K562 (cell line): ENCODE measurements at regions of chr2 and their contacts with region 1.

Region 1: GRCh38 chr2:180991820-180992219 is 11.4 kb downstream of the UBE2E3 start:
- DNase-seq: no peak
- ATAC-seq: peak; percentile 36
- H3K4me3 ChIP-seq: no peak overlapping the region
- H3K27ac ChIP-seq: no peak overlapping the region
- H3K4me1 ChIP-seq: no peaks in the 10 kb centered on the region
- H3K27me3 ChIP-seq: no peaks in the 10 kb centered on the region
- CTCF ChIP-seq: no peak
- EP300 ChIP-seq: no peak
- POLR2A ChIP-seq: no peak
- RAD21 ChIP-seq: no peak

Region 2: GRCh38 chr2:180699657-180700361 is 292.0 kb before region 1 on chr2:
- CTCF ChIA-PET with region 1: no interaction called
- POLR2A ChIA-PET with region 1: no interaction called
- in situ Hi-C with region 1: no loop called
- intact Hi-C with region 1: no loop called
- DNase-seq: no peak
- ATAC-seq: peak; percentile 32
- H3K4me3 ChIP-seq: no peak overlapping the region
- H3K27ac ChIP-seq: no peak overlapping the region
- H3K4me1 ChIP-seq: peaks cover 0 to 6% of the 10 kb centered on the region in 2 experiments; a peak in 1 of 5 replicates
- H3K27me3 ChIP-seq: no peaks in the 10 kb centered on the region
- CTCF ChIP-seq: no peak
- EP300 ChIP-seq: no peak
- POLR2A ChIP-seq: no peak
- RAD21 ChIP-seq: no peak

Region 3: DNA sequence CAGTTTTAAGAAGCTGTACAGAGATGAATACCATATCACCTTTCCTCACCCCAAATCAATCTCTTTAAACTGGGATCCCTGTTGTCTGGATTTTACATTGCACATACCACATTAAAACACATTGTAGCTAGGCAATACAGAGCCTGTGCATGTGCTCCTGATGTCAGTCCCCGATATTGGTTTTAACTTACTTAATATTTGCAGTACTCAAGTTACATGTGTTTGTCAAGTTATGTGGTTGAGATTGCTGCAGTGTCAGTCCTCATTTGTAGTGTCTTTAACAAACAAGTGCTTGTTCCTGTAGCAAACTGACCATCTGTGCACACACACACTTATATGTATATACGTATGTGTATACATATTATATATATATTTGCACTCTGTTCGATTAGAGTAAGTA is 21.8 kb before region 1 on chr2:
- CTCF ChIA-PET with region 1: no interaction called
- POLR2A ChIA-PET with region 1: no interaction called
- in situ Hi-C with region 1: no loop called
- intact Hi-C with region 1: no loop called
- DNase-seq: no peak
- ATAC-seq: no peak
- H3K4me3 ChIP-seq: no peak overlapping the region
- H3K27ac ChIP-seq: no peak overlapping the region
- H3K4me1 ChIP-seq: no peaks in the 10 kb centered on the region
- H3K27me3 ChIP-seq: no peaks in the 10 kb centered on the region
- CTCF ChIP-seq: no peak
- EP300 ChIP-seq: no peak
- POLR2A ChIP-seq: no peak
- RAD21 ChIP-seq: no peak

Region 4: GRCh38 chr2:181008407-181008806 is 16.6 kb after region 1 on chr2:
- CTCF ChIA-PET with region 1: no interaction called
- POLR2A ChIA-PET with region 1: interaction called, 11 read pairs
- in situ Hi-C with region 1: no loop called
- intact Hi-C with region 1: no loop called
- DNase-seq: peak in 1 of 4 experiments; percentile 5
- ATAC-seq: peak; percentile 55
- H3K4me3 ChIP-seq: no peak overlapping the region
- H3K27ac ChIP-seq: no peak overlapping the region
- H3K4me1 ChIP-seq: peaks cover 3 to 10% of the 10 kb centered on the region in 2 experiments; a peak in 3 of 5 replicates
- H3K27me3 ChIP-seq: no peaks in the 10 kb centered on the region
- CTCF ChIP-seq: no peak
- EP300 ChIP-seq: no peak
- POLR2A ChIP-seq: no peak
- RAD21 ChIP-seq: no peak

Region 5: GRCh38 chr2:181085734-181086133 is 93.9 kb after region 1 on chr2:
- CTCF ChIA-PET with region 1: no interaction called
- POLR2A ChIA-PET with region 1: no interaction called
- in situ Hi-C with region 1: no loop called
- intact Hi-C with region 1: no loop called
- DNase-seq: no peak
- ATAC-seq: no peak
- H3K4me3 ChIP-seq: no peak overlapping the region
- H3K27ac ChIP-seq: no peak overlapping the region
- H3K4me1 ChIP-seq: no peaks in the 10 kb centered on the region
- H3K27me3 ChIP-seq: no peaks in the 10 kb centered on the region
- CTCF ChIP-seq: no peak
- EP300 ChIP-seq: no peak
- POLR2A ChIP-seq: no peak
- RAD21 ChIP-seq: no peak

Region 6: DNA sequence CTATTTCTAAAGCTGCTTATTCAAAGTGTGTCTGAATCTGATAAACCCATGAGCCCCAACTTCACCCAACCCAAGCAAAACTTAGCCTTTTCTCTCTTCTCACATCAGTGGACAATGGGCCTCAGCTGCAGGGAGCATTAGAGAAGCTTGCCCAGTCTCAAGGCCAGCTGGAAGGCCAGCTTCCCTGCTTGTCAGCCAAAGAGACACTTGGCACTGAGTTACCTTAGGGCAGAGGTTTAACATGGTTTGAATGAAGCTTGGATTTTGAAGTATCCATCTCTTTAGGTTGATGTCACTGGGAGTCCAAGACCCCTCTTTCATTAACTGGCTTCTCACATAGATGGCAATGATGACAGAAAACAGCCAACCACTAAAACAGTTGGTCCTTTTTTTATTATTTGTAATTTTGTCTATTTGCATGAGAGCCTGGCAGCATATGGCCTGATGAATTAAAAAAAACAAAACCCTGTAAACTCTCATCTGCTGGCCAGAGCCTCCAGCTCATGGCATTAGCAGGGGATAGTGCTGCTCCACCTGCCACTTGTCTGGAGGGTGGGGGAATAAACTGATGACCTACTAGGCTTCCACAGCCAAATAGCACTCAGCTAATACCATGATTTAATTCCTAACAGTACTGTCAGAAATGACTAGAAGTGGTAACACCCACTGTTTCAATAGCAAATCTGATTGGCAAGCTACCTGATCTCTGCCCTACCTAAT is 125.5 kb after region 1 on chr2:
- CTCF ChIA-PET with region 1: no interaction called
- POLR2A ChIA-PET with region 1: no interaction called
- in situ Hi-C with region 1: no loop called
- intact Hi-C with region 1: no loop called
- DNase-seq: no peak
- ATAC-seq: no peak
- H3K4me3 ChIP-seq: no peak overlapping the region
- H3K27ac ChIP-seq: no peak overlapping the region
- H3K4me1 ChIP-seq: no peaks in the 10 kb centered on the region
- H3K27me3 ChIP-seq: no peaks in the 10 kb centered on the region
- CTCF ChIP-seq: no peak
- EP300 ChIP-seq: no peak
- POLR2A ChIP-seq: no peak
- RAD21 ChIP-seq: no peak